ENCODE measurements at regions of chr2 and their contacts with region 1.

Region 1: GRCh38 chr2:64644177-64645004 is 9.3 kb downstream of the SERTAD2 start:
- DNase-seq: peak; percentile 79 to 84 (median 82)
- H3K4me3 ChIP-seq: peak overlapping the region; percentile 46 to 74 (median 57)
- H3K4me3 Mint-ChIP-seq: peak overlapping the region; percentile 88 to 96
- H3K27ac ChIP-seq: peak overlapping the region; percentile 97 to 98
- H3K27ac Mint-ChIP-seq: peak overlapping the region; percentile 96 to 99 (median 99)
- H3K4me1 ChIP-seq: peaks cover 44 to 59% of the 10 kb centered on the region in 2 donors
- H3K4me1 Mint-ChIP-seq: peaks cover 90% of the 10 kb centered on the region
- H3K27me3 ChIP-seq: no peaks in the 10 kb centered on the region
- H3K27me3 Mint-ChIP-seq: no peaks in the 10 kb centered on the region
- CTCF ChIP-seq: no peak

Region 2: GRCh38 chr2:64523666-64524603 is 120.5 kb before region 1 on chr2 and contains the start of gene AFTPH:
- intact Hi-C with region 1: loop called in 1 of 2 experiments (anchors 10 kb)
- DNase-seq: peak; percentile 98 to 99 (median 99)
- H3K4me3 ChIP-seq: peak within 1 kb of the TSS; percentile 72 to 95 (median 81)
- H3K4me3 Mint-ChIP-seq: peak within 1 kb of the TSS; percentile 98 to 99
- H3K27ac ChIP-seq: peak within 1 kb of the TSS; percentile 93 to 98
- H3K27ac Mint-ChIP-seq: peak within 1 kb of the TSS; percentile 98 to 100 (median 100)
- H3K4me1 ChIP-seq: peaks cover 29 to 44% of the 10 kb centered on the region in 2 donors
- H3K4me1 Mint-ChIP-seq: peaks cover 33% of the 10 kb centered on the region
- H3K27me3 ChIP-seq: no peaks in the 10 kb centered on the region
- H3K27me3 Mint-ChIP-seq: peaks cover 0 to 1% (median 0%) of the 10 kb centered on the region in 3 donors
- CTCF ChIP-seq: no peak
- polyA plus RNA-seq, gene AFTPH: 22.3 to 28.6 (median 28.4) TPM

Region 3: GRCh38 chr2:64609227-64609941 is 35.0 kb before region 1 on chr2:
- intact Hi-C with region 1: loop called (anchors 5 kb)
- DNase-seq: peak; percentile 56 to 76 (median 71)
- H3K4me3 ChIP-seq: peak overlapping the region; percentile 51 to 84 (median 63)
- H3K4me3 Mint-ChIP-seq: peak overlapping the region; percentile 80 to 86
- H3K27ac ChIP-seq: peak overlapping the region; percentile 82 to 93
- H3K27ac Mint-ChIP-seq: peak overlapping the region; percentile 80 to 91 (median 90)
- H3K4me1 ChIP-seq: peaks cover 32 to 36% of the 10 kb centered on the region in 2 donors
- H3K4me1 Mint-ChIP-seq: peaks cover 30% of the 10 kb centered on the region
- H3K27me3 ChIP-seq: no peaks in the 10 kb centered on the region
- H3K27me3 Mint-ChIP-seq: peaks cover 1 to 5% (median 3%) of the 10 kb centered on the region in 3 donors
- CTCF ChIP-seq: peak; percentile 59

Region 4: GRCh38 chr2:64692401-64692800 is 48.0 kb after region 1 on chr2:
- intact Hi-C with region 1: no loop called
- DNase-seq: no peak
- H3K4me3 ChIP-seq: no peak overlapping the region
- H3K4me3 Mint-ChIP-seq: no peak overlapping the region
- H3K27ac ChIP-seq: no peak overlapping the region
- H3K27ac Mint-ChIP-seq: no peak overlapping the region
- H3K4me1 ChIP-seq: peaks cover 6 to 13% of the 10 kb centered on the region in 2 donors
- H3K4me1 Mint-ChIP-seq: peaks cover 21% of the 10 kb centered on the region
- H3K27me3 ChIP-seq: no peaks in the 10 kb centered on the region
- H3K27me3 Mint-ChIP-seq: peaks cover 0 to 2% (median 0%) of the 10 kb centered on the region in 3 donors
- CTCF ChIP-seq: no peak

Region 5: DNA sequence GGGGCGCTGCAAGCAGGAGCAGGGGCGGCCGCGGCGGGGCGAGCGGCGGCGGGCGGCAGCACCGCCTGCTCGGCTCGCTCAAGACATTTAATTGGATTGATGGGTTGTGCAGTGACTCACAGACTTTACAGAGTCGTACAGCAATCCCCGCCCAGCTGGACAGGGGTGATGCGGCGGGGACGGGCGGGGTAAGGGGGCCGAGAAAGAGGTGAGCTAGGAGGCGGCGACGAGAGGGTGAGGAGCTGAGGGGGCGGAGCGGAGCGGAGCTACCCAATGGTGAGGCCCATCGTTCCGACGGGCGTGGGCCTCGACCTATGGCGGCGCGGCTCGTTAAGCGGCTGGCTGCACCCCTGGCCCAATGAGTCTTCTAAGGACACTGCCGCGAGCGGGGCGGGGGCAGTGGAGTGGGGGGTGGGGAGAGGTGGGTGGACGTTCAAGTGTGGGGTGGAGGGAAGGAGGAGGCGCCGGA is 106.5 kb after region 1 on chr2:
- intact Hi-C with region 1: loop called in 1 of 2 experiments (anchors 2 kb)
- DNase-seq: peak; percentile 100
- H3K4me3 ChIP-seq: peak overlapping the region; percentile 85 to 98 (median 97)
- H3K4me3 Mint-ChIP-seq: peak overlapping the region; percentile 93 to 99
- H3K27ac ChIP-seq: peak overlapping the region; percentile 99 to 100
- H3K27ac Mint-ChIP-seq: peak overlapping the region; percentile 98 to 100 (median 99)
- H3K4me1 ChIP-seq: peaks cover 36 to 39% of the 10 kb centered on the region in 2 donors
- H3K4me1 Mint-ChIP-seq: peaks cover 32% of the 10 kb centered on the region
- H3K27me3 ChIP-seq: no peaks in the 10 kb centered on the region
- H3K27me3 Mint-ChIP-seq: no peaks in the 10 kb centered on the region
- CTCF ChIP-seq: no peak

Region 6: DNA sequence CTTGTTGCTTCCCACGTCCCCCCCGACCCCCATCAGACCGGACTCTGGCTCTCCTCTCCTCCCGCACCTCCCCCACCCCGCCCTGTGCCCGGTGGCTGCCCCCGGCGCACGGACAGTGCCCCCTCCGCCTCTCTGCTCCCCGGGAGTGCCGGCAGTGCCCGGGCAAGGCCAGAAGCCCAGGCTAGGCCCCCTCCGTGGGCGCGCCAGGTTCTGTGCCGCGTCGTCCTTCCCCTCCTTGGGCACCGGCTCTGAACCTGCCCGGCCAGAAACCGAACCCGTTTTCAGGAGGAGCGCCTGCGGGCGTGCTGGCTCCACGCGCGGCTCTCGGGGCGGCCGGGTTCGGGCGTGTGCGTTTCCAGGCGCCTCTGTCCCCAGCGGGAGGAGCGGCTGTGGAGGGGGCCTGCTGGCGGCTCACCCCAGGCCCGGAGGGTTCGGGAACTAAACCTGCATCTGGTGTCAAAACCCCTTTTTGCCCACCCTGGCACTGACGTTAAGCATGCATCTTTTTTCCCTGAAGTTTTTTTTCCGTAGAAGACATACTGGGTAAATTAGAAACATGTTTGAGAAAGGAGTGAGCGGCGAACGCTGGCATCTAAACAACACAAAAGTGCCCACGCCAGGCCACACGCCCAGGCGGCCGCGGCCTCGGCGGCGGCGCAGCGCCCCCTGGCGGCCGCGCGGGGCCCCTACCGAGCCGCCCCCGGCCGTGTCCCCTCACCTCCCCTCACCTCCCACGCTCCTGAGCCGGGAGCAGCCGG is 220.9 kb after region 1 on chr2:
- intact Hi-C with region 1: loop called in 1 of 2 experiments (anchors 5 kb)
- DNase-seq: peak; percentile 56 to 72 (median 69)
- H3K4me3 ChIP-seq: peak overlapping the region; percentile 51 to 75 (median 59)
- H3K4me3 Mint-ChIP-seq: peak overlapping the region; percentile 80 to 87
- H3K27ac ChIP-seq: peak overlapping the region; percentile 74 to 98
- H3K27ac Mint-ChIP-seq: peak overlapping the region in 4 of 7 donors; percentile 80 to 89 (median 84)
- H3K4me1 ChIP-seq: peaks cover 51 to 52% of the 10 kb centered on the region in 2 donors
- H3K4me1 Mint-ChIP-seq: peaks cover 14% of the 10 kb centered on the region
- H3K27me3 ChIP-seq: no peaks in the 10 kb centered on the region
- H3K27me3 Mint-ChIP-seq: peaks cover 0 to 9% (median 0%) of the 10 kb centered on the region in 3 donors
- CTCF ChIP-seq: peak; percentile 96